HepG2 (cell line): ENCODE measurements at regions of chr10 and their contacts with region 1.

Region 1: DNA sequence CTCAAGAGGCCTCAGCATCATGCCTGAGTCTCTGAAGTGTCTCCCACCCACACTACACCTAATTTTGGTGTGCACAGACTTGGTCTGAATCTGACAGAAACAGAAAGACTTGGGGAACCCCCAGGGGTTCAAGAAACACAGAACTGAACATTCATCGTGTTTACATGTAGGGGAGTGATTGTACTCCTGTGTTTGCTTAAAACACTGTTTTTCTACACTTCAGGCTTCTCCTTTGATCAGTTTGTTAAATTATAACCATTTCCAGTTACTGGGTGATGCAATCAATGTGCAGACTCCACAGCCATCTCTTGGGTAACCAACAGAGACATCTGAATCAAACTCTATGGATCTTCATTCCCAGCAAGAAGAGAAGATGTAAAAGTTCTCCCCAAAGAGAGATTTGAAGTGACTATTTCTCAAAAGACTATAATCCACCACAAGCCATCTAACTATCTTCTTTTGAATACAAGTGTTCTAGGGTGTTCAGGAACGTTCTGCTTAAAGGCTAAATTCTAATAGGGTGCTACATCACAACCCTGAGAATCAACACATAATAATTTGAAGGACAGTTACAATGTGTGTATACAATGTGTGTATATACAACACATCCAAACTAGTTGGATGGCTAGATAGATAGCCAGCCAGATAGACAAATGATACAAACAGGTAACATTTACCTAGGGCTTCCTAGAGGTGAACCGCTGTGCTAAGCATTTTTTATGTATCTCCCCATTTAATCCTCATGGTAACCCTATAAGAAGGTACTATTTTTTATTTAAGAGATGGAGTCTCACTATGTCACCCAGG is 34.2 kb downstream of the DNAJC12 start:
- DNase-seq: peak; percentile 94
- ATAC-seq: peak; percentile 93
- H3K4me3 ChIP-seq: peak overlapping the region; percentile 4 to 46 (median 31); a peak in 2 of 6 replicates
- H3K27ac ChIP-seq: peak overlapping the region; percentile 90
- H3K4me1 ChIP-seq: peaks cover 75% of the 10 kb centered on the region
- H3K27me3 ChIP-seq: no peaks in the 10 kb centered on the region
- CTCF ChIP-seq: no peak
- EP300 ChIP-seq: peak; percentile 82 to 99
- POLR2A ChIP-seq: 0 out of 4 replicates have a peak, but pooled peaks of 1 of the 2 experiments have one; percentile 2
- RAD21 ChIP-seq: no peak

Region 2: GRCh38 chr10:67764012-67764822 is 39.6 kb before region 1 on chr10:
- CTCF ChIA-PET with region 1: no interaction called
- POLR2A ChIA-PET with region 1: no interaction called
- in situ Hi-C with region 1: no loop called
- intact Hi-C with region 1: loop called (anchors 2 kb)
- DNase-seq: peak; percentile 85
- ATAC-seq: peak; percentile 89
- H3K4me3 ChIP-seq: peak overlapping the region; percentile 77 to 96 (median 90)
- H3K27ac ChIP-seq: peak overlapping the region; percentile 46
- H3K4me1 ChIP-seq: peaks cover 17% of the 10 kb centered on the region
- H3K27me3 ChIP-seq: peaks cover 0 to 1% of the 10 kb centered on the region in 2 experiments; a peak in 2 of 5 replicates
- CTCF ChIP-seq: no peak
- EP300 ChIP-seq: no peak
- POLR2A ChIP-seq: no peak
- RAD21 ChIP-seq: 0 out of 2 replicates have a peak, but pooled peaks have one; percentile 24

Region 3: GRCh38 chr10:67788025-67788886 is 15.5 kb before region 1 on chr10:
- CTCF ChIA-PET with region 1: no interaction called
- POLR2A ChIA-PET with region 1: interaction called, 14 read pairs
- in situ Hi-C with region 1: no loop called
- intact Hi-C with region 1: no loop called
- DNase-seq: peak; percentile 42
- ATAC-seq: peak; percentile 95
- H3K4me3 ChIP-seq: peak overlapping the region in 1 of 3 experiments; percentile 49; a peak in 4 of 6 replicates
- H3K27ac ChIP-seq: no peak overlapping the region
- H3K4me1 ChIP-seq: peaks cover 28% of the 10 kb centered on the region
- H3K27me3 ChIP-seq: no peaks in the 10 kb centered on the region
- CTCF ChIP-seq: peak; percentile 96
- EP300 ChIP-seq: no peak
- POLR2A ChIP-seq: no peak
- RAD21 ChIP-seq: peak; percentile 82

Region 4: DNA sequence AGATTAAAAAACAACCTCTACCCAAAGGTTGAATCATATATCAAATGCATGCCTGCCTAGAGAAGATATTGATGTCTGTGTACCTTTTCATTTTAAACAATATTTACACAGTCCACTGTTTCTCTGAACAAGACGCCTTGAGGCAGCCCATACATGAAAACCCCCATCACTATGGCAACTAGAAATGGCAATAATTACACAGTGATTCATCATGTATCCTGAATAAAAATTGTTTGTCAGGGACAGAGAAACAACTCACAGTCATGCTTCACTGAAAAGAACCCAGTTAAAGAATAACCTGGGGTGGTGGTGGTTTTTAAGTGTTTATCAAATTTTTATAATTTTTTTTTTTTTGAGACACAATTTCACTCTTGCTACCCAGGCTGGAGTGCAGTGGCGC is 14.5 kb after region 1 on chr10:
- CTCF ChIA-PET with region 1: no interaction called
- POLR2A ChIA-PET with region 1: interaction called, 11 read pairs
- in situ Hi-C with region 1: no loop called
- intact Hi-C with region 1: loop called (anchors 2 kb)
- DNase-seq: peak; percentile 85
- ATAC-seq: peak; percentile 87
- H3K4me3 ChIP-seq: no peak overlapping the region
- H3K27ac ChIP-seq: peak overlapping the region; percentile 74
- H3K4me1 ChIP-seq: peaks cover 54% of the 10 kb centered on the region
- H3K27me3 ChIP-seq: no peaks in the 10 kb centered on the region
- CTCF ChIP-seq: no peak
- EP300 ChIP-seq: peak in 1 of 2 experiments; percentile 84; a peak in 1 of 4 replicates
- POLR2A ChIP-seq: no peak
- RAD21 ChIP-seq: no peak

Region 5: DNA sequence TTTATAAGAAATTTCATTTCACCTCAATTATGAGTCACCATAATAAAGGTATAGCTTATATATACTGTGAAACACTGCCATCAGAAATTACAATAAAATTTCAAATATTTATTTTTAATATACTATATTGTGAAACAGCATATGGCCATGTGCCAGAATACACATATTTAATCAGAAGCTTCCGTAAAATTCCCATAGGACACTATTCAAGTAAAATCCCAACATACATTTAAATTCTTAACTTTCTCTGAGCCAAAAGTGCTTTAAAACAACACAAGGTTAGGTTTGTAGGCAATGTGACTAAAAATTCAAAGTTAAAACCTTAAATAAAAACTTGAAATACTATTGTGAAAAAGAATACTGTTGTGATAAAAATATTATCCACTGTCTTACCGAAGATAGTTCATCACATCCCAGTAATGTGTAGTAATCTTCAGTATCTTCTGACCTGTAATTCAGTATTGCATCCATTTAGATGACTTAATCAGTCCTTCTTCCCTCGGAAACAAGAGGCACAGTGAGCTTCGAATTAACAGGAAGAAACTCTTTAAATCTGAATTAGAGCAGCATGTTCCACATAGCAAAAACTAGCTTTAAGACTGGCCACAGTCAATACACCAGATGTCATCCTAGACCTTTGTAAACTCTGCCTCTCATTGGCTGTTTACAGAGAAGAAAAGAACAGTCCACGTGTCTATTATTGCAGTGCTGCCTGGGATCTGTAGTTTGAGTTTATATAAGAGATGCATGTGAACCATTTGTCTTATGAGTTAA is 33.9 kb after region 1 on chr10 and contains the start of gene DNAJC12:
- CTCF ChIA-PET with region 1: no interaction called
- POLR2A ChIA-PET with region 1: interaction called, 8 read pairs
- in situ Hi-C with region 1: no loop called
- intact Hi-C with region 1: loop called (anchors 1 kb)
- DNase-seq: peak; percentile 74
- ATAC-seq: peak; percentile 99
- H3K4me3 ChIP-seq: peak within 1 kb of the TSS; percentile 58 to 73 (median 66)
- H3K27ac ChIP-seq: peak within 1 kb of the TSS; percentile 59
- H3K4me1 ChIP-seq: peaks cover 32% of the 10 kb centered on the region
- H3K27me3 ChIP-seq: no peaks in the 10 kb centered on the region
- CTCF ChIP-seq: peak; percentile 36; the same call in 1 of the 2 replicates
- EP300 ChIP-seq: no peak
- POLR2A ChIP-seq: peak in 1 of 2 experiments; percentile 66; a peak in 2 of 4 replicates
- RAD21 ChIP-seq: no peak
- total RNA-seq, gene DNAJC12: 11.6 and 14.4 TPM in 2 replicates